Transverse colon (tissue), 4 donors: ENCODE measurements at regions of chr1 and their contacts with region 1.

Region 1: GRCh38 chr1:193031438-193031837 is 27.7 kb downstream of the UCHL5 start:
- DNase-seq: no peak
- H3K4me3 ChIP-seq: no peak overlapping the region
- H3K27ac ChIP-seq: no peak overlapping the region
- H3K4me1 ChIP-seq: peaks cover 0 to 12% (median under 1%) of the 10 kb centered on the region in 4 donors
- H3K27me3 ChIP-seq: no peaks in the 10 kb centered on the region
- CTCF ChIP-seq: peak; percentile 13 to 31 (median 21)
- EP300 ChIP-seq: no peak
- POLR2A ChIP-seq: no peak

Region 2: DNA sequence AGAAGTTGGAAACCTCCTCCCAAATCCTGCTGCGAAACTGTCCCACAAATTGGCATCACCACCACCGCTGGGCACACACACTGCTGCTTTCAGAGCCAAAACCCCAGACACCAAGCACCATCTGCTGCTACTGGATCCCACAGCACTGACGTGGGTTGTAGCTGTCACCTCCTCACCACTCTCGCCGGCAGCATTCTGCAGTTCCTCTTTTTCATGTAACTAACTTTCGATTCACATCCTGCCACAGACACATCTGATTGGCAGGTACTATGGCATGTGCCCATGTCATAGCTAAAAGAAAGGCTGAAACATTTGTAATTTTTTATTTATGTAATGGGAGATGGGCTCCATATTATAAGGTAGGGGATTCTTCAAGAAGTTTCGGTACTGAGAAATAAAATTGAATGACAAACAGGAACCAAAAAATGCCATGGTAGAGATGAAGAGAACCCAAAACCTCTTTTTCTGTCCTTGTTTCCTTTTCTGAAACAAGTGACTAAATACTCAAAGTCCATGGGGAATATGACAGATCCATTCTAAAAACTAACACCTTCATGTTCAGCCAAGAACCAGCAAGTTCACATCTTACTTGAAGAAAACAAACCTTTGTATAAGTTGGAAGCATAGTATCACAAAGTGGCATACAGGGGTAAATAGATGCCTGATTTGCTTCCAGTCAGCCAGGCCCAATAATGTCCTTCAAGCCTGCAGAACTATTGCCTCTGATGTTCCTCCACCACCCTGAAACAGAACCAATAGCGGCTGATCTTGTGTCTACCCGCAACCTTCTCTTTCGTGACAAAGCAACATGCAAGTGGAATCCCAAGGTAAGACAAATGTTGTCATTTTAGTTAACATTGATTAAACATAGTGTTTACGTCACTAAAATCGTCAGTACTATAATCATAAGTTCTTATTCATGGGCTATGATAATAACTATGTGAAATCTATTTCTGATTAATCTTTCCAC is 422.0 kb before region 1 on chr1:
- in situ Hi-C with region 1: loop called in 1 of 4 experiments (anchors 25 kb)
- intact Hi-C with region 1: no loop called
- DNase-seq: peak; percentile 81
- H3K4me3 ChIP-seq: no peak overlapping the region
- H3K27ac ChIP-seq: peak overlapping the region in 2 of 4 donors; percentile 25 to 27
- H3K4me1 ChIP-seq: peaks cover 0 to 8% (median 0%) of the 10 kb centered on the region in 4 donors
- H3K27me3 ChIP-seq: no peaks in the 10 kb centered on the region
- CTCF ChIP-seq: no peak
- EP300 ChIP-seq: no peak
- POLR2A ChIP-seq: no peak

Region 3: GRCh38 chr1:192700834-192701271 is 330.6 kb before region 1 on chr1:
- in situ Hi-C with region 1: no loop called
- intact Hi-C with region 1: no loop called
- DNase-seq: no peak
- H3K4me3 ChIP-seq: no peak overlapping the region
- H3K27ac ChIP-seq: no peak overlapping the region
- H3K4me1 ChIP-seq: peaks cover 0 to 21% (median 5%) of the 10 kb centered on the region in 4 donors
- H3K27me3 ChIP-seq: no peaks in the 10 kb centered on the region
- CTCF ChIP-seq: no peak
- EP300 ChIP-seq: no peak
- POLR2A ChIP-seq: no peak

Region 4: GRCh38 chr1:192793983-192794767 is 237.3 kb before region 1 on chr1:
- in situ Hi-C with region 1: loop called in 1 of 4 experiments (anchors 10 kb)
- intact Hi-C with region 1: no loop called
- DNase-seq: no peak
- H3K4me3 ChIP-seq: no peak overlapping the region
- H3K27ac ChIP-seq: peak overlapping the region in 2 of 4 donors; percentile 23 to 59
- H3K4me1 ChIP-seq: no peaks in the 10 kb centered on the region
- H3K27me3 ChIP-seq: no peaks in the 10 kb centered on the region
- CTCF ChIP-seq: no peak
- EP300 ChIP-seq: no peak
- POLR2A ChIP-seq: no peak

Region 5: GRCh38 chr1:193504920-193505319 is 473.5 kb after region 1 on chr1:
- in situ Hi-C with region 1: no loop called
- intact Hi-C with region 1: loop called (anchors 5 kb)
- DNase-seq: no peak
- H3K4me3 ChIP-seq: no peak overlapping the region
- H3K27ac ChIP-seq: no peak overlapping the region
- H3K4me1 ChIP-seq: no peaks in the 10 kb centered on the region
- H3K27me3 ChIP-seq: no peaks in the 10 kb centered on the region
- CTCF ChIP-seq: no peak
- EP300 ChIP-seq: no peak
- POLR2A ChIP-seq: no peak